HCT116 (cell line): ENCODE measurements at regions of chr3 and their contacts with region 1.

Region 1: GRCh38 chr3:96760956-96761355 is 53.4 kb upstream of the EPHA6 start:
- DNase-seq: no peak
- ATAC-seq: no peak
- H3K4me3 ChIP-seq: no peak overlapping the region
- H3K27ac ChIP-seq: no peak overlapping the region
- H3K4me1 ChIP-seq: no peaks in the 10 kb centered on the region
- H3K27me3 ChIP-seq: no peaks in the 10 kb centered on the region
- CTCF ChIP-seq: no peak
- POLR2A ChIP-seq: no peak
- RAD21 ChIP-seq: no peak

Region 2: GRCh38 chr3:96631050-96631449 is 129.9 kb before region 1 on chr3:
- CTCF ChIA-PET with region 1: no interaction called
- POLR2A ChIA-PET with region 1: no interaction called
- RAD21 ChIA-PET with region 1: no interaction called
- intact Hi-C with region 1: no loop called
- DNase-seq: no peak
- ATAC-seq: no peak
- H3K4me3 ChIP-seq: no peak overlapping the region
- H3K27ac ChIP-seq: no peak overlapping the region
- H3K4me1 ChIP-seq: no peaks in the 10 kb centered on the region
- H3K27me3 ChIP-seq: no peaks in the 10 kb centered on the region
- CTCF ChIP-seq: no peak
- POLR2A ChIP-seq: no peak
- RAD21 ChIP-seq: no peak

Region 3: DNA sequence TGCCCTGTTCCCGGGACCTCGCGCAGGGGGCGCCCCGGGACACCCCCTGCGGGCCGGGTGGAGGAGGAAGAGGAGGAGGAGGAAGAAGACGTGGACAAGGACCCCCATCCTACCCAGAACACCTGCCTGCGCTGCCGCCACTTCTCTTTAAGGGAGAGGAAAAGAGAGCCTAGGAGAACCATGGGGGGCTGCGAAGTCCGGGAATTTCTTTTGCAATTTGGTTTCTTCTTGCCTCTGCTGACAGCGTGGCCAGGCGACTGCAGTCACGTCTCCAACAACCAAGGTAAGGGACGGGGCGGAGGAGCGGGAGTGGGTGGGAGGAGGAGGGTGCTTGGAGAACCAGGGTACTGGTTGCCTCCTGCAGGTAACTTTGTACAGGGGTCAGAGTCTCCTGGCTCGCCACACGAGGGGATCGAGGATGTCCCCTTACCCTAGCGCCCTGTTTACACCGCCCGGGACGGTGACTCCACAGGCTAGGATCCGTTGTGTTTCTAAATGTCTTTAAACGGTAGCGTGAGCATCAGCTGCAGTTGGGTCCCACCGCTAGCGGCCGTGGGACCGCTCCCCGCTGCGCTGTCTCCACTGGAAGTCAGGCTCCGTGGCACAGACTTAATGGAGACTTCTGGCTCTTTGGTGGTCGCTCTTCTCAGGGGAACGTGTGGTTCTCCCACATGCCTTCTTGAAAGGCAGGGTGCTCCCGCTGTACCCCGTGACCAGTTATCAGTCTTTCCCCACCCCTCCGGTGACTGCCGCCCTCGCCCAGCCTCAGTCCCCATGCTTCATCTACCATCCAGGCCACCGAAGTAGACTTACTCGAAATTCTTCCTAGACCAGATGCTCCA is 54.0 kb after region 1 on chr3:
- CTCF ChIA-PET with region 1: no interaction called
- POLR2A ChIA-PET with region 1: no interaction called
- RAD21 ChIA-PET with region 1: no interaction called
- intact Hi-C with region 1: loop called (anchors 10 kb)
- DNase-seq: no peak
- ATAC-seq: no peak
- H3K4me3 ChIP-seq: no peak overlapping the region
- H3K27ac ChIP-seq: no peak overlapping the region
- H3K4me1 ChIP-seq: no peaks in the 10 kb centered on the region
- H3K27me3 ChIP-seq: no peaks in the 10 kb centered on the region
- CTCF ChIP-seq: no peak
- POLR2A ChIP-seq: no peak
- RAD21 ChIP-seq: no peak